ENCODE measurements at regions of chr11 and their contacts with region 1.

Region 1: DNA sequence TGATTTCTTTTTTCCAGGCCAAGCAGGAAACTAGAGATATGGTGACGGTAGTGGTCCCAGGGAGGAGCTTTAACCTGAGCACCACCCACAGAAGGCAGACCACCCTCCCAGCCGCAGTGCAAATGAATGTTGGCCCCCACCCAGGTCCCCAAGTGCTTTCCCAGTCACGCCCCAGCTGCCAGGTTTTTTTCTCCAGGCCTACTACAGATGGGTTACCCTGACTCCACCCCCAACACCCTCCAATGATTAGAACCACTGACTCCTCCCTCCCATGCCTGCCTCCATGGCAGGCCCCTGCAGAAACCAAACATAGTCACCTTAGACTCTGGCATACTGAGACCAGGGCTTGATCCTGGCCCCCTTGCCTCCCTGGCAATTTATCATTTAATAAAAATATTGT is 58.7 kb upstream of the CHST1 start:
- DNase-seq: no peak
- H3K4me3 ChIP-seq: no peak overlapping the region
- H3K27ac ChIP-seq: no peak overlapping the region
- H3K4me1 ChIP-seq: no peaks in the 10 kb centered on the region
- H3K27me3 ChIP-seq: no peaks in the 10 kb centered on the region
- CTCF ChIP-seq: no peak

Region 2: DNA sequence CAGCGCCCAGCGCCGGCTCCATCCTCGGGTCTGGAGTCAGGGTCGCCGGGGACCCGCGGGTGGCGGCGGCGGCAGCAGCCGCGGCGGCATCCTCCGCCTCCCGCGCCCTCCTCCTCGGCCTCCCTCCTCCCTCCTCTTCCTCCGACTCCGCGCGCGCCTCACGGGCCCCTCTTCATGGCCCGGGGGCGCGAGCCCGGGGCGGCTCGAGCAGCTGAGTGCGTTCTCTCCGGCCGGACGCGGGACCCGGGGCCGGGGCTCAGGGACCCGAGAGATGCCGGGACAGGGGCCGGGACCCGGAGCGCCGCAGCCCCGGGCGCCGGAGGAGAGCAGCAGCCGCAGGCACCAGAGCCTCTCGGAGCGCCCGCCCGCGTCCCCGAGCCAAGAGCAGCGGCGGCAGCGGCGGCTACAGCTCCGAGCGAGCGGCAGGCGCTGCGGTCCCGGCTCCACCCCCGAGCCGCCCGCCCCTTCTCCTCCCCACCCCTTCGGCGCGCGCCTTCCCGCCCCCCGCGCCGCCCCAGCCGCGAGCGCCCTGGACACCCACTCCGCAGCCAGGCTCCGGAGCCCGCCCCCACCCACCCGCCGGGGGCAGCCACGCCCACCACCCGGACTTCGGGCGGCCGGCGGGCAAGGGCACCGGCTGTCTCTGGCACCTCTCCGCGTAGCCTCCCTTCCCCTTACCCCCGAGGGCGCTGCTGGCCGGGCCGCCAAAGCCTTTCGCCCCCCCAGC is 58.8 kb before region 1 on chr11 and contains the start of gene CHST1:
- CTCF ChIA-PET with region 1: no interaction called
- dilution Hi-C with region 1: loop called (anchors 10 kb)
- in situ Hi-C with region 1: no loop called
- intact Hi-C with region 1: no loop called
- DNase-seq: peak; percentile 11
- H3K4me3 ChIP-seq: peak within 1 kb of the TSS; percentile 34 to 50 (median 37)
- H3K27ac ChIP-seq: no peak within 1 kb of the TSS
- H3K4me1 ChIP-seq: peaks cover 13% of the 10 kb centered on the region
- H3K27me3 ChIP-seq: peaks cover 13% of the 10 kb centered on the region
- CTCF ChIP-seq: no peak
- total RNA-seq, gene CHST1: 0.33 to 1.2 TPM

Region 3: GRCh38 chr11:45794169-45794568 is 70.0 kb after region 1 on chr11:
- CTCF ChIA-PET with region 1: no interaction called
- dilution Hi-C with region 1: loop called (anchors 5 kb)
- in situ Hi-C with region 1: no loop called
- intact Hi-C with region 1: no loop called
- DNase-seq: no peak
- H3K4me3 ChIP-seq: no peak overlapping the region
- H3K27ac ChIP-seq: no peak overlapping the region
- H3K4me1 ChIP-seq: no peaks in the 10 kb centered on the region
- H3K27me3 ChIP-seq: no peaks in the 10 kb centered on the region
- CTCF ChIP-seq: no peak